Cardiac septum (tissue), 1 donor: ENCODE measurements at regions of chr16 and their contacts with region 1.

Region 1: DNA sequence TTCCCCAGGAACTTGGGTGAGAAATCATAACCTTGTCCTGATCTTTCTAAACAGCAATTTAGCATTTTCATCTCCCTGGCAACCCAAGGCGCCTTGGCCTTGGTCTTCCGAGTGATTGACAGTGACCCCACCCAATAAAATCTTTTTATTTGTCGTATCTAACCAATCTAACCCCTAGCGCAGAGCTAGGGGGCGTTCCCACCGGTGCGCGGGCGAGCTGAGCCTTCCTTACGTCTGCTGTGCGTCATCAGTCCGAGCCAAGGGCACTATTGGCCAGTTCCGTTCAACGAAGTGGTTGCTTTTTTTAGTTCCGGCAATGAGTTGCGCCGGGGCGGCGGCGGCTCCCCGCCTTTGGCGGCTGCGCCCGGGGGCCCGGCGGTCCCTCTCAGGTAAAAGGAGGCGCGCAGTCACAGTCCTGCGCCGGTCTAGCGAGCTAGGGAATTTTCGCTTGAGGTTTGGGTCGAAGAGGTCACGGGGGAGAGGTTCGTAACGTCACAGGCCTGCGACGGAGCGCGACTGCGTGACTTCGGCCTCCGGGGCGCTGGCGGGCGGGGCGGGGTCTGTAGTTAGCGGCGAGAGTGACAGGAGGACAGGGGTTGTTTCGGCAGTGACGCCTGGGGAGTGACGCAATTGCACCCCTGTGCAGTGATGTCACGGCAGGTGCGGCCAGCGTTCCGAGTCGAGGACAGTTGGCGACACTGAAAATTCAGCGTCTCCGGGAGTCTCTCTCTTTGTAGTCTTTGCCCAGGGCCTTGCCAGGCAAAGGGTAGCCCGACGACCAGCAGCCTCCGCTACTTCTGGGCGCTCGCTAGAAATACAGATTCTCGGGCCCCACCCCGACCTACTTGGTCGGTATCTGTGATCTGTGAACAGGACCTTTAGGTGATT is at the start of gene COQ7:
- DNase-seq: peak; percentile 99
- total RNA-seq, gene COQ7: 32.6 TPM

Region 2: GRCh38 chr16:18983565-18984424 is 83.8 kb before region 1 on chr16 and contains the start of gene TMC7:
- intact Hi-C with region 1: loop called (anchors 2 kb)
- DNase-seq: peak; percentile 89
- total RNA-seq, gene TMC7: 1.9 TPM

Region 3: DNA sequence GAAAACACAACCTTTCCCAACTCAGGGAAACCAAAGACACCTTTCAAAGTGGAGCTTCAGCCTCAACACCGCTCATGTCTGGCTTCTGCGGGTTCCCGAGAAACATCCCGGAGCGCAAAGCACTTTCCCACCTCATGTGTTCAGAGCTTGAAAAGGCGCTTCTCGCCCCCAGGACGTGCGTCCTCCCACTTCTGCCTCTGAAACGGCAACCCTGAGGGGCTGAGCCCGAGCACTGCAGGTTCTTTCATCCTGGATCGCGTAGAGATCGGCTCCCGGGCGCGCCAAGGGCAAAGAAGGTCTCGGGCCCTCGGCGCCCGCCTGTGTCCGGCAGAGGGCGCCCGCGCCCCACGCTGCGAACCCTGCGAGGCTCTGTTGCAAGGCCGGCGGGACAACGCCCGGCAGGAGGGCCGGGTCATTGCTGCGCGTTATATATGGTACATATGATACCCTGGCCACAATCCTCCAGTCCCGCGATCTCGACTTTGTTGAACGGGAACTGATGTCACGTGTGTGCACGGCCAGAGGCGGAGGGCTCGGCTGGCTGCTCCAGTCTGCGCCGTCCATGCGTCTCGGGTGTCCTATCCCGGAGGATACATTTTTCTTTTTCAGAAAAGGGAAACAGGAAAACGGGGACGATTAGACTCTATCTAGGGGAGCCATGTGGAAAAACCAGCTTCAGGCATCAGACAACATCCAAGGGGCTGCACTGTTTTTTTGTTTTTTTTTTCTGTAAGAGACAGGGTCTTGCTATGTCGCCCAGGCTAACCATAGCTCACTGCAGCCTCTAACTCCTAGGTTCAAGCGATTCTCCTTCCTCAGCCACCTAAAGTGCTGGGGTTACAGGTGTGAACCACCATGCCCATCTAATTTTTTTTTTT is 19.0 kb after region 1 on chr16:
- intact Hi-C with region 1: no loop called
- DNase-seq: peak; percentile 95

Region 4: DNA sequence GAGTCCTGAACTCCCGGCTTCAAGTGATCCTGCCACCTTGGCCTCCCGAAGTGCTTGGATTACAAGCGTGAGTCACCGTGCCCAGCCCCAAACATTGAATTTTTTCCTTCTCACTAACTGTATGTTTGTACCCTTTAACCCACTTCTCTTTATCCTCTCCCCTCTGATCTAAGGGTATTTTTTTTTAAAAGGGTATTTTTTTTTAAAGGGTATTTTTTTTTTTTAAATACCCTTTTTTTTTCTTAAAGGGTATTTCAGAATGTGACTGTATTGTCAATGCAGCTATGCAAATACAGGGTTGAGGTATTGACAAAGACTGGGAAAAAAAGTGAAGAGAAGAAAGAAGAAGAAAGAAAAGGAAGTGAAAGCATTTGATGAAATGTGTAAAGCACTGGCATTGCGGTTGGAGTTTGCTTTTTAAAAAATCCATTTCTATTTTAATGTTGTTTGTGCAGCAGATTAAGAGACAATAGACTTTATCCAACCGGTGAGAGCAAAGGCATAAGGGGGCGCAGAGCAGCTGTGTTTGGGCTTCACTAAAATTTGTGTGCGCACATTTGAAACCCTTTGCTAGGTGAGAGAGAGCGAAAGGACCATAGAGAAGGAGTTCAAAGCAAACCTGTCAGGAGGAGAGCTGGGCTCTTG is 142.8 kb after region 1 on chr16:
- intact Hi-C with region 1: no loop called
- DNase-seq: no peak

Region 5: DNA sequence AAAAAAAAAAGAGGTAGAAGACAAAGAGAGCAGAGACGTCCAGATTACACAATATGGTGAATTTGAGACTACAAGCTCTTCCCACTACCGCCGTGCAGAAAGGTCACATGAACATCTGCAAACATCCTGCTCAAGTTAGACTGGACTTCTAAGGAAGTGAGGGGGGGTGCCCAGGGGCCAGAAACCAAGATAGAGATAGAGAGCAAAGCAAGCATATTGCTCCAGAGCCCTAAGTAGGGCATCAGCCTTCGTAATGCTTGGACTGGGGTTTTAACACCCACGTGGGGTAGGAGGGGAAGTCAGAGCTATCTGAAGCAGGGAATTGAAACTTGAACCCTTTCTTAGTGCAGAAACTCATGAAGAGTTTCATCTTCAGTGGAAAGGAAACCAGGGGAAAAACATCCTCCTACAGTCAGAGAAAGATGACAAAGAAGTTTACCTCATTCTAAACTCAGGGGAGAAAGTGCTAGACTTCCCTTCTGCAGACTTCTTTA is 226.6 kb after region 1 on chr16:
- intact Hi-C with region 1: no loop called
- DNase-seq: no peak